Prostate gland (tissue), 2 donors: ENCODE measurements at regions of chr17 and their contacts with region 1.

Region 1: GRCh38 chr17:47889734-47890529 is 6.1 kb upstream of the SP2 start:
- DNase-seq: peak; percentile 90
- H3K4me3 ChIP-seq: no peak overlapping the region
- H3K27ac ChIP-seq: no peak overlapping the region
- H3K4me1 ChIP-seq: no peaks in the 10 kb centered on the region
- H3K27me3 ChIP-seq: no peaks in the 10 kb centered on the region
- CTCF ChIP-seq: peak; percentile 96 to 99 (median 96)
- POLR2A ChIP-seq: no peak

Region 2: DNA sequence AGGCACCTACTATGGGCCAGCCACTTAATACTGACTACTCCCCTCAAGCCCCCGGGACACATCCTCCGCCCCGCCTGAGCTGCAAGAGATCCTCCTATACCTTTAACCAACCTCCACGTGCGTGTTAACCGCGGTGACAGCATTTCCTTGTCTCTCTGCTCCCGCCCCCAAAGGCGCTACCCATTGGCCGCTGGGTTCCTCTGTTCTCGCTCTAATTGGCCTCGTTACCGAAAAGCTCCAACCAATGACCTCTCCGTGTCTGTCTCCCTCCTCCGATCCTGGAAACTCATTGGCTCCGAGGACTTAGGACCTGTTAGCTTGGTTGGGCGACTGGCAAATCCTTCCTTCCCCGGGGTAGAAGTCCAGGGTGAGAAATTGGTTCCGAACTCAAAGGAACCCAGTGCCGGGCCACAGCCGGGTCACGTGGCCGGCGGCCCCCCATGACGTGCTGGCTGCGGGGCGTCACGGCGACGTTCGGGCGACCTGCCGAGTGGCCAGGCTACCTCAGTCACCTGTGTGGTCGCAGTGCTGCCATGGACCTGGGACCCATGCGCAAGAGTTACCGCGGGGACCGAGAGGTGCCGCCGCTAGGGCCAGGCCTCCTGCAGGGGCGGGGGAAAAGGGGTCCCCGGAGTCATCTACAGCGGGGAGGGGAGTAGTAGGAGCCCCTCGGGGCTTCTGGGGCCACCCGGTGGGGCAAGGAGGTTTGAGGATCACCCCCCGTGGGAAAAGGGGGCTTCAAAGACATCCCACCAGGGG is 51.5 kb after region 1 on chr17 and contains the start of gene PNPO:
- intact Hi-C with region 1: loop called (anchors 5 kb)
- DNase-seq: peak; percentile 97
- H3K4me3 ChIP-seq: peak within 1 kb of the TSS; percentile 58 to 64
- H3K27ac ChIP-seq: peak within 1 kb of the TSS; percentile 62 to 74
- H3K4me1 ChIP-seq: peaks cover 4% of the 10 kb centered on the region
- H3K27me3 ChIP-seq: no peaks in the 10 kb centered on the region
- CTCF ChIP-seq: peak in 1 of 4 experiments; percentile 35
- POLR2A ChIP-seq: peak; percentile 57
- total RNA-seq, gene PNPO: 37.3 to 55.2 TPM